HepG2 (cell line): ENCODE measurements at regions of chr12 and their contacts with region 1.

Region 1: GRCh38 chr12:102300824-102301461 is 103.3 kb upstream of the PMCH start:
- DNase-seq: peak; percentile 49
- ATAC-seq: peak; percentile 98
- H3K4me3 ChIP-seq: no peak overlapping the region
- H3K27ac ChIP-seq: no peak overlapping the region
- H3K4me1 ChIP-seq: no peaks in the 10 kb centered on the region
- H3K27me3 ChIP-seq: no peaks in the 10 kb centered on the region
- CTCF ChIP-seq: peak; percentile 78
- EP300 ChIP-seq: no peak
- POLR2A ChIP-seq: no peak
- RAD21 ChIP-seq: 0 out of 2 replicates have a peak, but pooled peaks have one; percentile 44

Region 2: GRCh38 chr12:102356690-102357089 is 55.7 kb after region 1 on chr12:
- CTCF ChIA-PET with region 1: no interaction called
- POLR2A ChIA-PET with region 1: no interaction called
- in situ Hi-C with region 1: no loop called
- intact Hi-C with region 1: no loop called
- DNase-seq: no peak
- ATAC-seq: no peak
- H3K4me3 ChIP-seq: no peak overlapping the region
- H3K27ac ChIP-seq: no peak overlapping the region
- H3K4me1 ChIP-seq: no peaks in the 10 kb centered on the region
- H3K27me3 ChIP-seq: no peaks in the 10 kb centered on the region
- CTCF ChIP-seq: no peak
- EP300 ChIP-seq: no peak
- POLR2A ChIP-seq: no peak
- RAD21 ChIP-seq: no peak

Region 3: DNA sequence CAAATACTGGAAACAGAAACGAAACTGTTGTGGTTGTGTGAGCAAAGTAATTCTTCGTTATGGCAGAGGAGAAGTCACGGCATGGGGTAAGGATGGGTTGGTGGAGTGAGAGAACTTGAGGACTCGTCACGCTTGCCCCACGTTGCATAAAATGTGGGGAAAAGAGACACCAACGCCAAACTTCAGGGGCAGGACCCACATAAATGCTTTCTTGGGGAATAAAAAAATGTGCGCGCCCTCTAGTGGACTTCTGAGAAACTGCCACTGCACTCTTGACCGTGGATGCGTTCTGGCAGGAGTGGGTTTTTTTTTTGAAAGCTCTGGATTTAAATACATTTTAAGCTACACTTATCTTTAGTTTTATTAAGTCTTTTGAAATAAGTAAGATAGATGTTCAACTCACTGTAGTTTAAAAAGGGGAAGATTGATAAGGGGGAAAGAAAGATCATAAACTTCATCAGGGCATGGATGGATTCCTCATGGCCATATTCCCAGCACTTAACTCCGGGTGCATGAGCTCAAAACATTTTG is 183.6 kb after region 1 on chr12:
- CTCF ChIA-PET with region 1: interaction called, 11 read pairs
- POLR2A ChIA-PET with region 1: no interaction called
- in situ Hi-C with region 1: loop called (anchors 25 kb)
- intact Hi-C with region 1: loop called (anchors 1 kb)
- DNase-seq: peak; percentile 26
- ATAC-seq: peak; percentile 62
- H3K4me3 ChIP-seq: peak overlapping the region in 1 of 3 experiments; percentile 23; a peak in 1 of 6 replicates
- H3K27ac ChIP-seq: no peak overlapping the region
- H3K4me1 ChIP-seq: no peaks in the 10 kb centered on the region
- H3K27me3 ChIP-seq: no peaks in the 10 kb centered on the region
- CTCF ChIP-seq: peak; percentile 79
- EP300 ChIP-seq: no peak
- POLR2A ChIP-seq: no peak
- RAD21 ChIP-seq: no peak

Region 4: DNA sequence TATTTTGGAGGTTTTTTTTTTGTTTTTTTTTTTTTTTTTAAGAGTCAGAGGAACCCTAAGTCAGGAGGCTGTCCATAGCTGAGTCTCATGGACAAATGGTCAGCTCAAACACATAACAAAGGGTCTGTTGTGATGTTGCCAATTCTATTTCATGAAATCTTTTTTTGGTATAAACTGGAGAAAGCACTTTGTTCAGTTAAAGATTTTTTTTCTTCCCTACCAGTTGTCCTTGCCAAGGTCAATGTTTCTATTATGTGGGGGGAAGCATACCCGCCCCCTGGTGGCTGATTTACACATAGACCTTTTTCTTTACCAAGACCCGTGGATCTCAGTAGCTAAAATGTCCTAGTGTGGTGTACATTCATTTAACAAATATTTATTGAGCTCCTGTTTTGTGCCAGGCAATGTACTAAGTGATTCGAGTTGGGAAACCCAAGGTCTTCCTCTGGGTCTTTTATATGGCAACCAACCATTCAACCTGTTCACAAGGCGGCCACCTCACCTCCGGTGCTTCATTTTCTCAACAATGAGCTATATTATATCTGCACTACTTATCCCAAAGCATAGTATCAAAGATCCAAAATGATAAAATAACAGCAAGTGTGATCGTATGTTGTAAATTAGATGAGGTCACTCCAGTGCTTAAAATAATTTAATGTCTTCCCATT is 401.6 kb after region 1 on chr12:
- CTCF ChIA-PET with region 1: interaction called, 4 read pairs
- POLR2A ChIA-PET with region 1: no interaction called
- in situ Hi-C with region 1: no loop called
- intact Hi-C with region 1: loop called (anchors 2 kb)
- DNase-seq: peak; percentile 54
- ATAC-seq: peak; percentile 79
- H3K4me3 ChIP-seq: no peak overlapping the region
- H3K27ac ChIP-seq: no peak overlapping the region
- H3K4me1 ChIP-seq: no peaks in the 10 kb centered on the region
- H3K27me3 ChIP-seq: no peaks in the 10 kb centered on the region
- CTCF ChIP-seq: peak; percentile 52
- EP300 ChIP-seq: no peak
- POLR2A ChIP-seq: no peak
- RAD21 ChIP-seq: no peak